PC-9 (cell line): ENCODE measurements at regions of chr12 and their contacts with region 1.

Region 1: DNA sequence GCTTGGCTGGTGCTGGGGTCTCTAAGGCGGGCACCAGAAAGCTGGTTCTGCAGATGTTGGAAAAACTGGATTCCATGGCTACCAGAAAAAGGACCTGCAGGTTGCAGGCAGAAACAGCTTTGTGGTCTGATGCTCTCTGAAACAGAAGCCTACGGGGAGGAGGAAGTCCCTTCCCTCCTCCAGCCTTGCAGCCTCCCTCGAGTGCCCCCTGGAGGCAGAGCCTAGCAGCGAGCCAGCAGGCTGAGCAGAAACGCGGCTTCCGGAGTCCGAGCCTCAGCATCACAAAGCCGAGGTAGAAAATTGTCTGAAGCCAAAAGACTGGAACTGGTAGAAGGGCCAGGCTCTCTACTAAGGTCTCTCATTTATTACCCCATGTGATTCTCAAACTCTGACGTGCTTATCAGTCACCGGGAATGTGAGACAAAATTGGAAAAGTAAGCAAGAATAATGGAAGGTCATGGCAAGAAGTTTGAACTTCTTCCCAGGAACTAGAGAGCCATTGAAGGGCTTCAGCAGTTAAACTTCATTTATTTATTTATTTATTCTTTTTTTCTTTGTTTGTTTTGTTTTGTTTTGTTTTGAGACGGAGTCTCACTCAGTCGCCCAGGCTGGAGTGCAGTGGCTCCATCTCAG is 82.2 kb upstream of the CPSF6 start:
- DNase-seq: peak; percentile 66 to 78
- H3K4me3 ChIP-seq: no peak overlapping the region
- H3K27ac ChIP-seq: no peak overlapping the region
- H3K4me1 ChIP-seq: no peaks in the 10 kb centered on the region
- H3K27me3 ChIP-seq: no peaks in the 10 kb centered on the region
- CTCF ChIP-seq: peak; percentile 83

Region 2: GRCh38 chr12:68831272-68831671 is 325.9 kb before region 1 on chr12:
- CTCF ChIA-PET with region 1: interaction called, 4 read pairs
- POLR2A ChIA-PET with region 1: interaction called, 4 read pairs
- intact Hi-C with region 1: loop called (anchors 1 kb)
- DNase-seq: no peak
- H3K4me3 ChIP-seq: no peak overlapping the region
- H3K27ac ChIP-seq: no peak overlapping the region
- H3K4me1 ChIP-seq: no peaks in the 10 kb centered on the region
- H3K27me3 ChIP-seq: no peaks in the 10 kb centered on the region
- CTCF ChIP-seq: no peak

Region 3: GRCh38 chr12:68865399-68866164 is 291.6 kb before region 1 on chr12:
- CTCF ChIA-PET with region 1: no interaction called
- POLR2A ChIA-PET with region 1: no interaction called
- intact Hi-C with region 1: loop called (anchors 2 kb)
- DNase-seq: no peak
- H3K4me3 ChIP-seq: no peak overlapping the region
- H3K27ac ChIP-seq: no peak overlapping the region
- H3K4me1 ChIP-seq: no peaks in the 10 kb centered on the region
- H3K27me3 ChIP-seq: no peaks in the 10 kb centered on the region
- CTCF ChIP-seq: no peak

Region 4: GRCh38 chr12:69130064-69130463 is 27.1 kb before region 1 on chr12:
- CTCF ChIA-PET with region 1: no interaction called
- POLR2A ChIA-PET with region 1: no interaction called
- intact Hi-C with region 1: no loop called
- DNase-seq: no peak
- H3K4me3 ChIP-seq: no peak overlapping the region
- H3K27ac ChIP-seq: no peak overlapping the region
- H3K4me1 ChIP-seq: no peaks in the 10 kb centered on the region
- H3K27me3 ChIP-seq: 0 out of 2 replicates have a peak, but pooled peaks cover 6% of the 10 kb centered on the region
- CTCF ChIP-seq: no peak

Region 5: GRCh38 chr12:69173368-69173767 is 16.2 kb after region 1 on chr12:
- CTCF ChIA-PET with region 1: no interaction called
- POLR2A ChIA-PET with region 1: no interaction called
- intact Hi-C with region 1: no loop called
- DNase-seq: no peak
- H3K4me3 ChIP-seq: no peak overlapping the region
- H3K27ac ChIP-seq: no peak overlapping the region
- H3K4me1 ChIP-seq: no peaks in the 10 kb centered on the region
- H3K27me3 ChIP-seq: no peaks in the 10 kb centered on the region
- CTCF ChIP-seq: no peak

Region 6: DNA sequence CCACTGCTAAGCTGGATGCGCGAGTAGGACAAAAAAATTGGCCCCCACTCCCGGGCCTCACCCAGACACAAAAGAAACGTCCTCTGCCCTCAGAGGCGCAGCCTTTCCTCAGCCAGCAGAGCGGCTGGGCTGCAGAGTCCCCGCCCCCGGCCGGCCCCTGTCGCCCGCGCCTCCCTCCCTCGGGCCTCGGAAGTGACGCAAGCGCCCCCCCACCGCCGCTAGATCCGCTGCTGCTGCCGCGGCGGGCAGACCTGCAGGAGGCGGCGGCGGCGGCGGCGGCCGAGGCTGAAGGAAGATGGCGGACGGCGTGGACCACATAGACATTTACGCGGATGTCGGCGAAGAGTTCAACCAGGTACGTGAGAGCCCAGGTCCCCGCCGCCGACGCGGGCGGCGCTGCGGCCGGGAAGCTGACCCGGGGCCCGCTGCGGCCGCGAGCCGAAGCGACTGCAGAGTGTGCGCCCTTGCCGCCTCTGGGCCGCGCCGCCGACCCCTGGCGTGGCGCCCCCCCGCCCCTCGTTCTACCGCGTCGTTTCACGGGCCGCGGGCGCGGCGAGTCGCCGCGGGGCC is 82.3 kb after region 1 on chr12 and contains the start of gene CPSF6:
- CTCF ChIA-PET with region 1: no interaction called
- POLR2A ChIA-PET with region 1: no interaction called
- intact Hi-C with region 1: loop called (anchors 1 kb)
- DNase-seq: peak; percentile 77 to 92
- H3K4me3 ChIP-seq: peak within 1 kb of the TSS; percentile 99
- H3K27ac ChIP-seq: peak within 1 kb of the TSS; percentile 63
- H3K4me1 ChIP-seq: peaks cover 22% of the 10 kb centered on the region
- H3K27me3 ChIP-seq: no peaks in the 10 kb centered on the region
- CTCF ChIP-seq: no peak
- total RNA-seq, gene CPSF6: 56.8 and 77.9 TPM in 2 replicates

Region 7: DNA sequence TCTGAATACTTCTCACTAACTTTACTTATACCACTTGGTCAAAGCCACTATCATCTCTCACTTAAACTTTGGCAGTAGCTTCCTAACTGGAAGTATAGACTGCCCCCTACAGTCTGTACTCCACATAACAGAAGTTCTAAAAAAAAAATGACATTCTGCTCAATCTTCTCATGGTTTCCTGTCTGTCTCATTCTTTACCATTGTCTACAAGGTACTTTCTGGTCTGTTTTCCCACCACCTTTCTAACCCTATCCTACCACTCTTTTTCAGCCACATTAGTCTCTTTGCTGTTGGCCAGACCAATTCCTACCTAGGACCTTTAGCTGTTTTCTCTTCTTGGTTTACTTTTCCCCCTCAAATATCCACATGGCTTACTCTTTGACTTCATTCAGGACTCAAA is 96.9 kb after region 1 on chr12:
- CTCF ChIA-PET with region 1: interaction called, 6 read pairs
- POLR2A ChIA-PET with region 1: no interaction called
- intact Hi-C with region 1: loop called (anchors 1 kb)
- DNase-seq: peak in 1 of 2 experiments; percentile 36
- H3K4me3 ChIP-seq: no peak overlapping the region
- H3K27ac ChIP-seq: no peak overlapping the region
- H3K4me1 ChIP-seq: no peaks in the 10 kb centered on the region
- H3K27me3 ChIP-seq: no peaks in the 10 kb centered on the region
- CTCF ChIP-seq: peak; percentile 81

Region 8: GRCh38 chr12:69359531-69360347 is 202.6 kb after region 1 on chr12 and contains the start of gene YEATS4:
- CTCF ChIA-PET with region 1: interaction called, 36 read pairs
- POLR2A ChIA-PET with region 1: no interaction called
- intact Hi-C with region 1: loop called (anchors 1 kb)
- DNase-seq: peak; percentile 87 to 88
- H3K4me3 ChIP-seq: peak within 1 kb of the TSS; percentile 63
- H3K27ac ChIP-seq: peak within 1 kb of the TSS; percentile 82
- H3K4me1 ChIP-seq: peaks cover 16% of the 10 kb centered on the region
- H3K27me3 ChIP-seq: no peaks in the 10 kb centered on the region
- CTCF ChIP-seq: no peak
- total RNA-seq, gene YEATS4: 23.5 and 30.5 TPM in 2 replicates